ENCODE measurements at regions of chr3 and their contacts with region 1.

Region 1: DNA sequence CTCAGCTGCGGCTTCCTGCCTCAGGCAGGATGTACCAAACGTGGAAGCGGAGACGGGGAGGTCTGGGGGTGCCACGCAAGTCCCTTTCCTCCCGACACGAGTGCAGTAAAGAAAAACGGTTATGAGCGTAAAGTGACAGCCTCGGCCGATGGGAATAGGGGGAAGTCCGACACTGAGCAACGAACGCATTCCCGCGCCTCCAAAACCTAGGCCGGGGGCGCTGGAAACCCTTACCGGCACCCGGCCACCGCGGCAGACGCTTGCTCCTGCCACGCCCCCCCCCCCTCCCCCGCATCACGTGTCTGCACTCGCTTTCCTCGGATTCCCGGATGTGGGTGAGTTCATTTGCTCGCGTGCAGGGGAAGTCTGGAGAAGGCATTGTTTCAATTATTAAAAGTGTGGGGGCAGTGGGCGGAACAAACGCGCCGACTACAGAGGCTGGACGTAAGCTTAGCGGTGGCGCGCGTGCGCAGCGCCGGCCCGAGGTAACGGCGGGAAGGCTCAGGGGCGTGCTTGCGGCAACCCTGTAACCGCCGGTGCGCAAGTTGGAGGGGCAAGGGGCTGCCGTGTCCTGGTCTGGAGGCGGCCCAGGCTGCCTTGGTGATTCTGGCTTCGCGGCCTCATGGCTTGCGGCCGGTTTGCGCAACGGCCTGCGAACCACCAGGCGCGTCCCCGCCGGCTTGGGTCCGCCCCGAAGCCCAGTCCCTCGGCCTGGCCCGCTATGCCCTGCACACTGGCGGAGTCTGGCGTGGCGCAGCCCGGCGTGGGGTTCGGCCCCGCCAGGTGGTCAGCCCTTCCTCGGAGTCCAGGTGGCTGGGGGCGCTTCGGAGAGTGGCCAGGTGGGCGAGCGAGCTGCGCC is at the starts of genes ANAPC13 and CEP63:
- DNase-seq: peak; percentile 95
- ATAC-seq: peak; percentile 86
- H3K4me3 Mint-ChIP-seq: peak within 1 kb of the TSS; percentile 92
- H3K27ac Mint-ChIP-seq: peak within 1 kb of the TSS; percentile 98
- H3K4me1 Mint-ChIP-seq: peaks cover 47% of the 10 kb centered on the region
- H3K27me3 Mint-ChIP-seq: no peaks in the 10 kb centered on the region
- total RNA-seq, gene ANAPC13: 35.9 to 39.7 TPM
- total RNA-seq, gene CEP63: 21.3 to 25.9 TPM

Region 2: GRCh38 chr3:133448478-133449122 is 1037.3 kb before region 1 on chr3:
- CTCF ChIA-PET with region 1: no interaction called
- POLR2A ChIA-PET with region 1: no interaction called
- intact Hi-C with region 1: loop called in 1 of 2 experiments (anchors 5 kb)
- DNase-seq: peak; percentile 77
- ATAC-seq: peak; percentile 93
- H3K4me3 Mint-ChIP-seq: no peak overlapping the region
- H3K27ac Mint-ChIP-seq: peak overlapping the region; percentile 69
- H3K4me1 Mint-ChIP-seq: peaks cover 38% of the 10 kb centered on the region
- H3K27me3 Mint-ChIP-seq: no peaks in the 10 kb centered on the region

Region 3: DNA sequence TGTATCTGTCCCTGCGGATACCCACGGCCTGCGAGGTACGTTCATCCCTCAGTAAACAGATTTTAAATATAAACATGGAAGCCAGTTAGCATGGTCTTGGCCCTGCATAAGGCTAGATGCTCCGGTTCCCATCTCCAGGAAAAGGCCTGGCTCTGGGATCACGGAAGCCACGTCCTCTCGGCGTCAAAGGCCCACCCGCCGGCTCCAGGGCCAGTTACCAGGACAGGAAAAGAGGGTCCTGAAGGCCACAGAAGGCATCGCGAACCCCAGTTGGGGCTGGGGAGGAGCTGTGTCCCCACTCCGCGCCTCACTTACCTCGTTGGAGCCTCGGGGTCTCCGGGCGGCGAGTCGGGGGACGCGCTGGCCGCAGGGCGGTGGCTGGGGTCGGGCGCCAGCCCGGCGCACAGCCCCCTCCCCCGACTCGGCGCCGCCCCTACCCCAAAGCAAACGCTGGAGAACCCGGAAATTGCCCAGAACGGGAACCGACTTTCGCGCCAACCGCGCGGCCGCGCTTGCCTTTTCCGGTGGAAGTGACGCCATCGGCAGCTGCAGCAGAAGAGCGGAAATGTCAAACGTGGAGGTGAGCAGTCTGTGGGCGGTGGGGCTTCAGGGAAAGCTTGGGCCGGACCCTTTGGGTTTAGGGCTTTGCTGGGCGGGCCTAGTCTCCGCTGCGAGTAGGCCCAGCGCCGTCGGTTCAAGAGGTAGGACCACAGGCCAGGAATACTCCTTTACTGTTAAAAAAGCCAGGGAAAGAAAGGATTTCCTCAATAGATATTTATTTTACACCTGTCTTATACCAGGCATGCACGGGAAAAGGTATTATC is 824.3 kb before region 1 on chr3 and contains the start of gene TOPBP1:
- CTCF ChIA-PET with region 1: no interaction called
- POLR2A ChIA-PET with region 1: no interaction called
- intact Hi-C with region 1: loop called (anchors 2 to 5 kb)
- DNase-seq: peak; percentile 94
- ATAC-seq: peak; percentile 85
- H3K4me3 Mint-ChIP-seq: peak within 1 kb of the TSS; percentile 91
- H3K27ac Mint-ChIP-seq: peak within 1 kb of the TSS; percentile 98
- H3K4me1 Mint-ChIP-seq: peaks cover 33% of the 10 kb centered on the region
- H3K27me3 Mint-ChIP-seq: no peaks in the 10 kb centered on the region
- total RNA-seq, gene TOPBP1: 80.9 to 94.6 TPM

Region 4: DNA sequence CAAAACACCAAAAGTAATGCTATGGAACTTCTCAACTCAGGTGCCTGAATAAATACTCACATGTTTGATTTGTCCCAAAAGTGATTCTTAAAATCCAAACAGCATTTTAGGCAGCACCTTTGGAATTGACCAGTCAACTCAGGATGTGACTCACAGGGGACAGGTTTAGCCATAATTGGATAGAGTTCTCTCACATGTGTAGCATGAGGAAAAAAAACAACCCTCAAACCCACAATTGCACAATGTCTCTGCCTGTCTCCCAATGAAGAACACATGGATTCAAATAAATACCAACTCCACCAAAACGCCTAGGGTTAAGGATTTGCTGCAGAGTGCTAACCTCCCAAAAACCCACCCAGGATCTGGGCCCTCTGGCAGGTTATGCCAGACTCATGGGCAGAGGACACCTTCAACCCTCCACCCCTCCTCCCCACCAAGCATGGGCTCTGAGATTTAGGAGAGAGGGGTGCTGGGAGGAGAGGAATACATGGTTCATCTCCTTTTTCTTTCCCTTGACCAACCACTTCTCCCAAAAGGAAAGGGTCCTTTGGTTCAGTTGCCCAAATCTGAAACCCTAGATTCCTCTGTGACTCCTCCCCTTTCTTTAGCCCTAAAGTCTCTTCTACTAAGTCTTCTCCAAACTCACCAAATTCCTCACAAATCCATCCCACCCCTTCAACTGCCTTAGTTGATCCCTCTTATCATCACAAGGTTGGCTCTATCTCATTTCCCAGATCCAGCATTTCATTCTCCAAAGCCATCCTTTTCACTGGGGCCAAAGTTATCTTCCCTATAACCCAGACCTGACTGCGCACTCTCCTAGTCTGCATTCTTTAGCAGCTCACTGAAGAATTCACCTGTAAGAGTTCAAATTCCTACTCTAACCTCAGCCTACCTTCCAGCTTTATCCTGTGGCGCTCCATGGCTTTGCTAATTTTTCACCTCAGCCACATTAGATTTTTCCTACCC is 243.0 kb before region 1 on chr3:
- CTCF ChIA-PET with region 1: interaction called, 3 read pairs
- POLR2A ChIA-PET with region 1: no interaction called
- intact Hi-C with region 1: loop called (anchors 5 kb)
- DNase-seq: peak; percentile 20
- ATAC-seq: peak; percentile 51
- H3K4me3 Mint-ChIP-seq: no peak overlapping the region
- H3K27ac Mint-ChIP-seq: no peak overlapping the region
- H3K4me1 Mint-ChIP-seq: peaks cover 88% of the 10 kb centered on the region
- H3K27me3 Mint-ChIP-seq: no peaks in the 10 kb centered on the region

Region 5: DNA sequence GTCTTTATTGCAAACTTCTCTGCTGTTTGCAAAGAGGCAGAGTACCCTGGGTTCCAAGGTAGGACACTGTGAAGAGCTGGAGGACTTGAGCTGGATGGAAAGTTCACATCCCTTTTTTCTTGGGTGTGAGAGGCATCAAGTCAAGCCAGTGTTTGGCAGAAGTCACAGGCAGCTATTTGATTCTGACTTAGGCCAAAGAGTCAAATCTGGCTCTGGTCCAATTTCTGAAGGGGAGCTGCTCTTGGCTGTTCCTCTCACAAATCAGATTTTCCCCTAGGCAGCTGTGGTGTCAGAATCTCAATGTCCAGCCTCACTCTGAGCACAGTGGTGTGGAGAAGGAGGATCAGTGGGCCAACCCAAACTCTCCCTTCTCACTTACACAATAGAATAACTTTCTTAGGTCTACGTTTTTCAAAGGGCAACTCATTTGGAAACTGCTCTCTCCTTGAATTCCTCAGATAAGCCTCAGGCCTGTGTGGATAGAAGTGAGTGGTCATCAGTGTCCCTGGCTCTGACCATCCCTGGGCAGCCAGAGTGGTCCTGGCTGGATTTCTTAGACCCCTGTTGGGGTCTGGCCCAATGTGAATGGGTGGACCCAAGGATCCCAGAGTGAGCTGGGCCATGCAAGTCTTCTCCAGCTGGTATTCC is 93.5 kb before region 1 on chr3:
- CTCF ChIA-PET with region 1: no interaction called
- POLR2A ChIA-PET with region 1: no interaction called
- intact Hi-C with region 1: no loop called
- DNase-seq: no peak
- ATAC-seq: no peak
- H3K4me3 Mint-ChIP-seq: no peak overlapping the region
- H3K27ac Mint-ChIP-seq: no peak overlapping the region
- H3K4me1 Mint-ChIP-seq: no peaks in the 10 kb centered on the region
- H3K27me3 Mint-ChIP-seq: peaks cover 24% of the 10 kb centered on the region

Region 6: GRCh38 chr3:134473868-134474546 is 11.9 kb before region 1 on chr3:
- CTCF ChIA-PET with region 1: interaction called, 44 read pairs
- POLR2A ChIA-PET with region 1: interaction called, 6 read pairs
- intact Hi-C with region 1: no loop called
- DNase-seq: peak; percentile 88
- ATAC-seq: peak; percentile 78
- H3K4me3 Mint-ChIP-seq: no peak overlapping the region
- H3K27ac Mint-ChIP-seq: no peak overlapping the region
- H3K4me1 Mint-ChIP-seq: no peaks in the 10 kb centered on the region
- H3K27me3 Mint-ChIP-seq: no peaks in the 10 kb centered on the region

Region 7: DNA sequence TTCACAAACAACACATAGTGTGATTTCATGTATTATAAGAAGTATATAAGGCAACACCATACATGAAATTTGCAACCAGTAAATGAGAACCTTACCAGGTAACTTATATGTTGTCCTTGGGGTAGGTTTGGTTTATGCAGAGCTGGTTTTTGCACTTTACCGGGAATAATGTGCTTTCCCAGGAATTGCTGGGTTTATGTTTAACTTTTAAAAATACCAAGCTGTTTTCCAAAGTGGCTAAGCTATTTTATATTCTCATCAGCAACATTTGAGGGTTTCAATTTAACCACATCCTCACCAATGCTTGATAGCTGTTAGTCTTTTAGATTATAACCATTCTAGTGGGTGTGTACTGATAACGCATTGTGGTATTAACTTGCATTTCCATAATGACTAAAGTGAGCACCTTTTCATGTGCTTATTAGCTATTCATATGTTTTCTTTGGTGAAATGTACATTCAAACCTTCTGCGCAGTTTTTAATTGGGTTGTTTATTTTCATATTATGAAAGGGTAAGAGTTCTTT is 93.3 kb after region 1 on chr3:
- CTCF ChIA-PET with region 1: no interaction called
- POLR2A ChIA-PET with region 1: no interaction called
- intact Hi-C with region 1: no loop called
- DNase-seq: no peak
- ATAC-seq: no peak
- H3K4me3 Mint-ChIP-seq: no peak overlapping the region
- H3K27ac Mint-ChIP-seq: no peak overlapping the region
- H3K4me1 Mint-ChIP-seq: no peaks in the 10 kb centered on the region
- H3K27me3 Mint-ChIP-seq: no peaks in the 10 kb centered on the region

Region 8: DNA sequence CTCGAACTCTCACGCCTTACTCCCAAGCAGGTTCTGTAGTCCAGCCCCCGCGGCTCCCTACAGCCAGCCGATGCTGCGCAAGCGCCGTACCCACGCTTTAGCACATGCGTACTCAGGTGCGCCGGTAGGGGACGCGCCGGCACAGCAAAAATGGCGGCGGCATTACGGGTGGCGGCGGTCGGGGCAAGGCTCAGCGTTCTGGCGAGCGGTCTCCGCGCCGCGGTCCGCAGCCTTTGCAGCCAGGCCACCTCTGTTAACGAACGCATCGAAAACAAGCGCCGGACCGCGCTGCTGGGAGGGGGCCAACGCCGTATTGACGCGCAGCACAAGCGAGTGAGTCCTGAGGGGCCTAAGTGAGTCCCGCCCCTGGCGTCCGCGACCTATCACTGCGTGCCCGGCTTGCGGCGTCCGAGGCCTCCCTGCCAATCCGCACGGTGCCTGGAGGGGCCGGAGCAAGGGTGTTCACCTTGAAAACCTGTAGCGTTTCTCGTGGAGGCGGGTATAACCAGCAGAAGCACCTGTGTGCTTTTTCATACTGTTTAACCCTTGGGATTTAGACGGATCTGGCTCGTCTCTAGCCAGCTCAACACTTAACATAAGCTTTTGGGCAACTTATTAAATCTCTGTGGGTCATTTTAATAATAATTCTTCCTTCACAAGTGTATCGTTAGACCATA is 1764.4 kb after region 1 on chr3 and contains the start of gene PCCB:
- CTCF ChIA-PET with region 1: no interaction called
- POLR2A ChIA-PET with region 1: no interaction called
- intact Hi-C with region 1: loop called in 1 of 2 experiments (anchors 5 kb)
- DNase-seq: peak; percentile 96
- ATAC-seq: peak; percentile 99
- H3K4me3 Mint-ChIP-seq: peak within 1 kb of the TSS; percentile 83
- H3K27ac Mint-ChIP-seq: peak within 1 kb of the TSS; percentile 91
- H3K4me1 Mint-ChIP-seq: peaks cover 15% of the 10 kb centered on the region
- H3K27me3 Mint-ChIP-seq: no peaks in the 10 kb centered on the region
- total RNA-seq, gene PCCB: 45.3 to 51.8 TPM